ENCODE measurements at regions of chr3 and their contacts with region 1.

Region 1: DNA sequence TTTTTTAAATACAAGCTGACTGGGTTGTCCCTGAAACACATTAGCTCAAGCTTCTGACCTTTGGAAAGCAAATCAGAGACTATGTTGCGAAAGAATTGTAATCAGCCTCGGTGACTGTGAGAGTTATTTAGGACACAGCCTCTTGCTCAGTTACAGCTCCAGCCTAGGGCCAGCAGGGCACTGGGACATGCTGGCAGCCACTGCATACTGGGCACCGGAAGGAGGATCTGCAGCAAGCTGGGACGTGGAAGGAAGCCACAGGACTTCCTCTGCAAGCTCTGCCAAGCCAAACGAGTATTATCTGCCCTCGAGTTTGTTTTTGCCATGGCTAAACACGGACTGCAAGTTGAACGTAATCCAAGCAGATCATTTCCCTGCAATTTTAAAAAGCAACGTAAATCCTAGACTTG is 24.4 kb upstream of the COPG1 start:
- DNase-seq: peak; percentile 91
- H3K4me3 Mint-ChIP-seq: peak overlapping the region; percentile 41
- H3K27ac Mint-ChIP-seq: peak overlapping the region; percentile 80
- H3K4me1 Mint-ChIP-seq: peaks cover 23% of the 10 kb centered on the region
- H3K27me3 Mint-ChIP-seq: no peaks in the 10 kb centered on the region
- CTCF ChIP-seq: no peak

Region 2: DNA sequence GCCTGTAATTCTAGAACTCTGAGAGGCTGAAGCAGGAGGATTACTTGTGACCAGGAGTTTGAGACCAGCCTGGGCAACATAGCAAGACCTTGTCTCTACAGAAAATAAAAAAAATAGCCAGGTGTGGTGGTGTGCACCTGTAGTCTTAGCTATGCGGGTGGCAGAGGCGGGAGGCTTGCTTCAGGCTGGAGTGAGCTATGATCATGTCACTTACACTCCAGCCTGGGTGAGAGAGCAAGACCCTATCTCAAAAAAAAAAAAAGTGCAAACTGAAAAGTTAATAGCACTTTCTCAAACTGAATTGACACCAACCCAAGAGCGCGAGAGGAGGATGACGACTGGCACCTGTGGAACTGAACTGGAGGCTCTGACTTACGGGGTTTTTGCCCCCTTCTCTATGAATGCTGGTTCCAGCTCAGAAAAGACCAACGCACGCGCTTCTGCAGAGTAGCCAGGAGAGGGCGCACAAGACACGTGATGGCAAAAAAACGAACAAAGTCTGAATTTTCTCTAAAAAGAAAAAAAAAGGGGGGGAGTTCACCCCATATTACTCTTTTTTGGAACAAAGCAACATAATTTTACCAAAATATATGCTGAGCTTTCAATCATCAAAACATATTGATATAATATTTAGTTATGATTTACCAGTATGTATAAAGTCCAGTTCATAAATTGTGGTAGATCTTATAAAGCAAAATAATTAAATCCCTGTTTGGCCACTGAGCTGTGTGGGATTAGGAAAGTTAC is 254.8 kb before region 1 on chr3:
- CTCF ChIA-PET with region 1: no interaction called
- POLR2A ChIA-PET with region 1: no interaction called
- intact Hi-C with region 1: no loop called
- DNase-seq: peak; percentile 43
- H3K4me3 Mint-ChIP-seq: no peak overlapping the region
- H3K27ac Mint-ChIP-seq: no peak overlapping the region
- H3K4me1 Mint-ChIP-seq: no peaks in the 10 kb centered on the region
- H3K27me3 Mint-ChIP-seq: no peaks in the 10 kb centered on the region
- CTCF ChIP-seq: peak; percentile 93

Region 3: DNA sequence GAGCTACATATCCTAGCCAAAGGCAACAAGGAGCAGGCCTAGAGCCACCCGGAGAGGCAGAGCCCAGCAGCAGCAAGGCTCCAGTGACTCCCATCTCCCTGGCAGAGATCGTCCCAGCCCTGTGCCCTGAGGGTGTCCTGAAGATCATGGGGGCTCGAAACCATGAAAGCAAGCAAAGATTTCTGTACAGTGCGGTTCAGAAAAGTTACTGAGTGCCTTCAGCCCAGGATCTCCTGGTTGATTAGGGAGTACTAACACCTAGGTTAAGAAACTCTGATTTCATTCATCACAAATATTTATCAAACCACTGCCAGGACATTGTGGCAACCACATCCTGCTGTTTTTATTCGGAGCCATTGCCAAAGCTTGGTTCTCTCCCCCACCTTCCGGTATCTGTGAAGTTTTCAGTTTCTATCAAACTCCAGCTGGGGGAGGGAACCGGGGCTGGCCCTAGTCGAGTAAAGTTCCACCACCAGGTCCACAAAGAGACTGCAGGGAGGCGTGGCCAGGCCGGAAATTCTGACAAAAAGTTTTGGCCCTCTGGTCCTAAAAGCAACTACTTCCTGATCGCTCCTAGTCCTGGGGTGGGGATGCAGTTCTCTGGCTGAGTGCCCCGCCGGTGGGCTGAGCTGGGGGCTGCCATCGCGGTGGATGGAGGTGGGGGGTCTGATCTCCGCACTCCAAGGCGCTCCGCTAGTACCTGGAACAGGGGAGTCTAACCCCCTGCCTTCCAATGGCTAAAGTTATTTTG is 104.6 kb before region 1 on chr3:
- CTCF ChIA-PET with region 1: interaction called, 4 read pairs
- POLR2A ChIA-PET with region 1: interaction called, 15 read pairs
- intact Hi-C with region 1: no loop called
- DNase-seq: peak; percentile 98
- H3K4me3 Mint-ChIP-seq: peak overlapping the region; percentile 77
- H3K27ac Mint-ChIP-seq: peak overlapping the region; percentile 82
- H3K4me1 Mint-ChIP-seq: peaks cover 26% of the 10 kb centered on the region
- H3K27me3 Mint-ChIP-seq: no peaks in the 10 kb centered on the region
- CTCF ChIP-seq: no peak

Region 4: GRCh38 chr3:129211772-129212171 is 13.2 kb before region 1 on chr3:
- CTCF ChIA-PET with region 1: interaction called, 8 read pairs
- POLR2A ChIA-PET with region 1: interaction called, 56 read pairs
- intact Hi-C with region 1: no loop called
- DNase-seq: peak; percentile 98
- H3K4me3 Mint-ChIP-seq: peak overlapping the region; percentile 12
- H3K27ac Mint-ChIP-seq: peak overlapping the region; percentile 63
- H3K4me1 Mint-ChIP-seq: peaks cover 12% of the 10 kb centered on the region
- H3K27me3 Mint-ChIP-seq: no peaks in the 10 kb centered on the region
- CTCF ChIP-seq: no peak

Region 5: GRCh38 chr3:129238945-129239706 is 14.1 kb after region 1 on chr3:
- CTCF ChIA-PET with region 1: interaction called, 14 read pairs
- POLR2A ChIA-PET with region 1: interaction called, 67 read pairs
- intact Hi-C with region 1: no loop called
- DNase-seq: peak; percentile 77
- H3K4me3 Mint-ChIP-seq: peak overlapping the region; percentile 54
- H3K27ac Mint-ChIP-seq: peak overlapping the region; percentile 96
- H3K4me1 Mint-ChIP-seq: peaks cover 19% of the 10 kb centered on the region
- H3K27me3 Mint-ChIP-seq: no peaks in the 10 kb centered on the region
- CTCF ChIP-seq: no peak

Region 6: GRCh38 chr3:129259612-129260452 is 34.8 kb after region 1 on chr3:
- CTCF ChIA-PET with region 1: no interaction called
- POLR2A ChIA-PET with region 1: no interaction called
- intact Hi-C with region 1: no loop called
- DNase-seq: no peak
- H3K4me3 Mint-ChIP-seq: no peak overlapping the region
- H3K27ac Mint-ChIP-seq: no peak overlapping the region
- H3K4me1 Mint-ChIP-seq: no peaks in the 10 kb centered on the region
- H3K27me3 Mint-ChIP-seq: no peaks in the 10 kb centered on the region
- CTCF ChIP-seq: no peak

Measured in MCF 10A (cell line).